Mucosa of descending colon (tissue), 3 donors: ENCODE measurements at regions of chr1 and their contacts with region 1.

Region 1: DNA sequence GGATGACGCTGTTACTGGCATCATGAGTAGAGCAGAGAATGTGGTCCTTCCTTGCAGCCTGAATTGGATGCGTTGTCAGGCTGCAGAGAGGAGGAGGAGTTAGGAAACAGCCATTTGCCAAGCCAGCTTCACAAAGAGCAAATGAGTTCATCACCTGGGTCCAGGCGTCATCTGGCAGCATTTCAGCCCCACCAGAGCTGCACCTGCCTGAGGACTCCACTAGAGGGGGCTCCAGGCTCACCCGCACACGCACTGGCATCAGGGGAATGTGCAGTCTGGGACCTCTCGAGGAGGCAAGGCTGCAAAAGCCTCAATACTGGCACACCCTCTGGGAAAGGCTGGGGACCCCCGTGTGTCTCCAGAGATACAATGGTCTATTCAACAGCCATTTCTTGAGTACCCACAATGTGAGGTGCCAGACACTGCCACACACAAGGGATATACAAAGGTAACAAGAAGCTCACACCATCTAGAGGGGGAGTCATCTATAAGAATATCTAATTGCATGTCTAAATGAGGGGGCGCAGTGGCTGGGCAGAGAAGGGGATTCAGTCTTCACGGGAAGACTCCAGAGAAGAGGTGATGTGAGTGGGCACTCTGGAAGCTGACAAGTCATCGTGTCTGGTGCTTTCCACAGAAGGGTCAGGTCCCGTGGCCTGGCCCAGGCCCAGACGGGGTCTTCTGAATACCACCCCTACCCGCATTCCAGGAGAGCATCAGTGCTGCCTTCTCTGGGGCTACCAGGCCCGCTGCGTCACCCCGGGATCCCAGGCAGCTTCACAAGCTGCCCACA is 53.5 kb upstream of the CNTN2 start:
- DNase-seq: peak in 2 of 3 donors; percentile 65 to 75
- ATAC-seq: peak; percentile 89
- H3K4me3 ChIP-seq: no peak overlapping the region
- H3K4me1 ChIP-seq: no peaks in the 10 kb centered on the region
- CTCF ChIP-seq: peak; percentile 77

Region 2: GRCh38 chr1:205061665-205062069 is 72.2 kb after region 1 on chr1:
- intact Hi-C with region 1: loop called (anchors 5 kb)
- DNase-seq: peak in 2 of 3 donors; percentile 80 to 86
- ATAC-seq: peak; percentile 80
- H3K4me3 ChIP-seq: no peak overlapping the region
- H3K4me1 ChIP-seq: peaks cover 2% of the 10 kb centered on the region
- CTCF ChIP-seq: peak; percentile 74